MCF 10A (cell line): ENCODE measurements at regions of chr11 and their contacts with region 1.

Region 1: DNA sequence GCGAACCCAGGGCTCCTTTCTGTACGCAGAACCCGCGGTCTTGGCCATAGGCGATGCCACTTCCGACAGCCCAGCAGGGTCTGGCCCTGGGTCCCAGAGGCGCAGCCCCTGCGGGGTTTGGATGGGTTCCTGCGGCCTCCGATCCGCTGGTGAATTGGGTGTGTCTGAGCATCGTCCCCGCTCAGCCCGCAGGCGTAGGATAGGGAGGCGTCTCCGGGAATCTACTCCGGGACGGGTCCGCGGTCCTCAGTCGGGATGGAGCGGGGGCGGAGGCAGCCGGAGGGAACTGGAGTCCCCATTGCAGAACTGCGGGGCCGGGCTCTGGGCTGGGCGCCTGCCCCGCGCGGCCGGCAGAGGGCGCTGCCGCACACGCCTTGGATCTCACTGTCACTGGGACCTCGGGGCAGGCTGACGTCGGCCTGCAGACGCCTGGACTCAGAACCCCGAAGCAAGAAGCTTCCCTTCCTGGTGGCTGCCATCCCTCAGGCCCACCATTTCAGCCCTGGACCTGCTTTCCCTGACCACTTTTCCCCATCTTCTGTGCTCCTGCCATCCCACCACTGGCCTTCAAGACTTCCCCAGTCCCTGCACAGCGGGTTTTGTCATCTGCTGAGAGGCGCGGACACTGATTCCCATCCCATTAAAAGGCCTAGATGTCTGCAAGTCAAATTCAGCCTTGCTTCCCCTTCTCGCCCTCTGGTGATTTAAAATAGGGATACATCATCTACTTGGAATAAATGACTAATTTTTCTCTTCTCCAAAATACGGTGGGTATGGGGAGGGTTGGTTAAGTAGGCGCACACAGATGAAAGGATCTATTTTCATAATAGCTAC is 38.3 kb upstream of the CREB3L1 start:
- DNase-seq: peak; percentile 89
- H3K4me3 Mint-ChIP-seq: peak overlapping the region; percentile 81
- H3K27ac Mint-ChIP-seq: peak overlapping the region; percentile 22
- H3K4me1 Mint-ChIP-seq: peaks cover 39% of the 10 kb centered on the region
- H3K27me3 Mint-ChIP-seq: no peaks in the 10 kb centered on the region
- CTCF ChIP-seq: peak; percentile 98

Region 2: DNA sequence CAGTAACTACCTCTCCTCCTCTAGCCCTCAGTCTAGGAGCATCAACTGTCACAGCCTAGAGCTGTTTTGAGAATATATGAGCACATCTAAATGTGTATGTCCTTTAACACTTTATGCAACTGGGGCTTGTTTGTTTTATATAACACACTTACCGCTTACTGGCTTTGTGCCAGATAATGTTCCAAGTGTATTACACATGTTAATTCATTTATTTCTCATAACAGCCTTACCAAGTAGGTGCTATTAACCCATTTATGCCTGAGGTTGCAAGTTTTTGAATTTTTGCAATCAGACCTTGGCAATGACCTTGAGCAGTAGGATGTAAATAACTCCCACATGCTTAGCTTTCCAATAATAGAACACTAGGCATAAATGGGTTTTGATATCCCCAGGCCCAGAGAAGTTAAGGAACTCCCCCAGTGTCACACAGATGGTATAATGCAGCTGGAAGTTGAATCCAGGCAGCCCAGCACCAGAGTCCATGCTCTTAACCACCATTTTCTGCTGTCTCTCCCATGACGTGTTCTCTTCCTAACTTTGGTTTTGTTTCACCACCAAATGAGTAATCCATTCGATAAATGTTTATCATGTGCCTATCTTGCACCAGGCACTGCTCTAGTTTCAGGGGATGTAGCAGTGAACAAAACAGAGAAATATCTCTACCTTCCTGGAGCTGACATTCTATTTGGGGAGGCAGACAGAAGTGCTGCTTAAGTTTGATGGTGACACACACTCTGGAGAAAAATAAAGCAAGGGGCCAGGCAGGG is 1069.7 kb before region 1 on chr11:
- CTCF ChIA-PET with region 1: no interaction called
- POLR2A ChIA-PET with region 1: no interaction called
- intact Hi-C with region 1: no loop called
- DNase-seq: peak; percentile 17
- H3K4me3 Mint-ChIP-seq: no peak overlapping the region
- H3K27ac Mint-ChIP-seq: no peak overlapping the region
- H3K4me1 Mint-ChIP-seq: no peaks in the 10 kb centered on the region
- H3K27me3 Mint-ChIP-seq: no peaks in the 10 kb centered on the region
- CTCF ChIP-seq: no peak

Region 3: DNA sequence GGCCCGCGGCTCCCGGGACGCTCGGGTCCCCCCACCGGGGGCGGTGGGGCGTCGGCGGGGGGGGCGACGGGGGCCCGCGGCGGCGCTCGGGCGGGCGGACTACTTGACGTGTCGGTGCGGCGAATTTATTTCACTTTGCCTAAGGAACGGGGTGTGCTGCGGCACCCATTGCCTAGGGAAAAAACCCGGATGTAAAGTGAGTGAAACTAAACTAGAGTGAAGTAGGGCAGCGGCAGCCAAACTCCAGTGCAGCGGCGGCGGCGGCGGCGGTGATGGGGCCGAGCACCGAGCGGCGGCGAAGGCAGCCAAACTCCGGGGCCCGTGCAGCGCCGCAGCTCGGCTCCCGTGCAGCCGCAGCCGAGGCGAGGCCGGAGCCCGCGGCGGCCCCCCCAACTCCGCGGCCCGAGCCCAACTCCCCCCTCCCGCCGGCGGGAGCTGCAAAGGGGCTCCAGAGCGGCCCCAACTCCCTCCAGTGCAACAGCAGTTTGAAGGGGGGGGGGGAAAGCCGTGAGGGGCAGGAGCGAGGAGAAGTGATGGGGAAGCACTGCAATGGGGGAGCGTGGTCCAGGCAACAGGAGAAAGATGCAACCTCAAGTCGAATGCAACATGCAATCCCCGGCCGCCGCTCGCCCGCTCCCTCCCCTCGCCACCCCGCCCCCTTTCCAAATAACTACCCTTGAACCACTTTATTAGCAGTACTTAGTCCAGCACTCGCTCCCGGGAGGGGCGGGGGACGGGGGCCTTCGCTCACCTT is 117.3 kb before region 1 on chr11:
- CTCF ChIA-PET with region 1: interaction called, 8 read pairs
- POLR2A ChIA-PET with region 1: interaction called, 28 read pairs
- intact Hi-C with region 1: loop called (anchors 1 kb)
- DNase-seq: peak; percentile 88
- H3K4me3 Mint-ChIP-seq: peak overlapping the region; percentile 94
- H3K27ac Mint-ChIP-seq: no peak overlapping the region
- H3K4me1 Mint-ChIP-seq: peaks cover 23% of the 10 kb centered on the region
- H3K27me3 Mint-ChIP-seq: no peaks in the 10 kb centered on the region
- CTCF ChIP-seq: no peak

Region 4: GRCh38 chr11:46160100-46160499 is 79.1 kb before region 1 on chr11:
- CTCF ChIA-PET with region 1: interaction called, 18 read pairs
- POLR2A ChIA-PET with region 1: interaction called, 13 read pairs
- intact Hi-C with region 1: no loop called
- DNase-seq: peak; percentile 12
- H3K4me3 Mint-ChIP-seq: no peak overlapping the region
- H3K27ac Mint-ChIP-seq: peak overlapping the region; percentile 28
- H3K4me1 Mint-ChIP-seq: peaks cover 19% of the 10 kb centered on the region
- H3K27me3 Mint-ChIP-seq: no peaks in the 10 kb centered on the region
- CTCF ChIP-seq: no peak

Region 5: GRCh38 chr11:46183819-46184218 is 55.4 kb before region 1 on chr11:
- CTCF ChIA-PET with region 1: no interaction called
- POLR2A ChIA-PET with region 1: no interaction called
- intact Hi-C with region 1: no loop called
- DNase-seq: peak; percentile 42
- H3K4me3 Mint-ChIP-seq: no peak overlapping the region
- H3K27ac Mint-ChIP-seq: no peak overlapping the region
- H3K4me1 Mint-ChIP-seq: peaks cover 6% of the 10 kb centered on the region
- H3K27me3 Mint-ChIP-seq: no peaks in the 10 kb centered on the region
- CTCF ChIP-seq: no peak

Region 6: GRCh38 chr11:46302866-46303265 is 63.7 kb after region 1 on chr11:
- CTCF ChIA-PET with region 1: interaction called, 374 read pairs
- POLR2A ChIA-PET with region 1: interaction called, 33 read pairs
- intact Hi-C with region 1: loop called (anchors 1 kb)
- DNase-seq: no peak
- H3K4me3 Mint-ChIP-seq: no peak overlapping the region
- H3K27ac Mint-ChIP-seq: no peak overlapping the region
- H3K4me1 Mint-ChIP-seq: peaks cover 21% of the 10 kb centered on the region
- H3K27me3 Mint-ChIP-seq: no peaks in the 10 kb centered on the region
- CTCF ChIP-seq: no peak